ENCODE measurements at regions of chr10 and their contacts with region 1.

Region 1: GRCh38 chr10:8416192-8416701 is 361.8 kb downstream of the GATA3 start:
- DNase-seq: peak; percentile 65
- H3K4me3 Mint-ChIP-seq: no peak overlapping the region
- H3K27ac Mint-ChIP-seq: peak overlapping the region; percentile 95
- H3K4me1 Mint-ChIP-seq: peaks cover 57% of the 10 kb centered on the region
- H3K27me3 Mint-ChIP-seq: no peaks in the 10 kb centered on the region

Region 2: GRCh38 chr10:8138471-8138870 is 277.8 kb before region 1 on chr10:
- intact Hi-C with region 1: loop called (anchors 1 kb)
- DNase-seq: no peak
- H3K4me3 Mint-ChIP-seq: peak overlapping the region; percentile 79
- H3K27ac Mint-ChIP-seq: peak overlapping the region; percentile 93
- H3K4me1 Mint-ChIP-seq: peaks cover 63% of the 10 kb centered on the region
- H3K27me3 Mint-ChIP-seq: no peaks in the 10 kb centered on the region

Region 3: GRCh38 chr10:8360365-8360764 is 55.9 kb before region 1 on chr10:
- intact Hi-C with region 1: loop called (anchors 2 kb)
- DNase-seq: peak; percentile 37
- H3K4me3 Mint-ChIP-seq: peak overlapping the region; percentile 70
- H3K27ac Mint-ChIP-seq: peak overlapping the region; percentile 88
- H3K4me1 Mint-ChIP-seq: peaks cover 79% of the 10 kb centered on the region
- H3K27me3 Mint-ChIP-seq: no peaks in the 10 kb centered on the region

Region 4: DNA sequence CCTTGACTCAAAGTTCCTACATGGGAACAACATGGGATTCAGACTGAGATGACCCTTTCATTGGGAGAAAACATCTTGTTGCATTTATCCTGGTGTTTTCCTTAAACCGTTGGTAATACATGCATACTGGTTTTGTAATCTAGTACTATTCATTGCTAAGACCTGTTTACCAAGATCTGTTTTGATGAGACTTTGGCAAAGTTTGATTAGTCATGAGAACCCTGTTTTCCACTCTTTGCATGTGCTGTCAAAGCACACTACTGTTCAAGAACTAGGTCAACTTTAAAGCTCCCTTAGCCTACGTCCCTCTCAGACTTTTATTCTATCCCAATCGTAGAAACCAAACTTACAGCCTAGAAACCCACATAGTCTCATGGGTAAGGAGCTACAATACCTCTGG is 289.2 kb after region 1 on chr10:
- intact Hi-C with region 1: no loop called
- DNase-seq: no peak
- H3K4me3 Mint-ChIP-seq: no peak overlapping the region
- H3K27ac Mint-ChIP-seq: no peak overlapping the region
- H3K4me1 Mint-ChIP-seq: peaks cover 2% of the 10 kb centered on the region
- H3K27me3 Mint-ChIP-seq: no peaks in the 10 kb centered on the region

Region 5: DNA sequence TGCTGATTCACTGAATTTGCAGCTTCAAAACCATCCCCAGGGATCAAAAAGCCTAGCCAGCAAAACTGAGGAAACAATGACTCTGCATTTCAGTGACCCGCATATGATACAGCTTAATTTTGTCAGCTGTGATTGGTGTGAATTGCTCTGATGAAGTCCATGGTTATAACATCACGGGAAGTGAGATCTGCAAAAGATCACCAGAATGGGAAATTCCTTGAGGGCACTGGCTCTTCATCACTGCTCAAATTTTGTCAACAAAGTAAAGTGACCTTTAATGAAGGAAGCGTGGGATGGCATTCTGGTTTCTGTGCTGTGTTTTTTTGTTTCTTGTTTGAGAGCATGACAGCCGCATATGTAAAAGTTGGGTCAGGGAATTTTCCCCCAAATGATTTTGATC is 384.2 kb after region 1 on chr10:
- intact Hi-C with region 1: loop called (anchors 1 kb)
- DNase-seq: no peak
- H3K4me3 Mint-ChIP-seq: no peak overlapping the region
- H3K27ac Mint-ChIP-seq: peak overlapping the region; percentile 40
- H3K4me1 Mint-ChIP-seq: peaks cover 16% of the 10 kb centered on the region
- H3K27me3 Mint-ChIP-seq: no peaks in the 10 kb centered on the region

Region 6: GRCh38 chr10:9091530-9092093 is 675.4 kb after region 1 on chr10:
- intact Hi-C with region 1: loop called (anchors 5 kb)
- DNase-seq: no peak
- H3K4me3 Mint-ChIP-seq: no peak overlapping the region
- H3K27ac Mint-ChIP-seq: peak overlapping the region; percentile 24
- H3K4me1 Mint-ChIP-seq: peaks cover 49% of the 10 kb centered on the region
- H3K27me3 Mint-ChIP-seq: no peaks in the 10 kb centered on the region

Measured in activated T-helper 2 cell treated with anti-CD3 and anti-CD28 coated beads, Interferon-gamma antibody, Interleukin-2, Interleukin-4, amounts not matched to agents 10 μg/mL and 5 μg/mL and 100 μg/mL, durations not matched to agents 14 hours and 24 hours and 36 hours (primary cell).